ENCODE measurements at regions of chr6 and their contacts with region 1.

Region 1: GRCh38 chr6:144582939-144583613 is 297.9 kb downstream of the UTRN start:
- DNase-seq: no peak
- ATAC-seq: no peak
- H3K4me3 ChIP-seq: no peak overlapping the region; a peak in 1 of 4 replicates
- H3K27ac ChIP-seq: no peak overlapping the region
- H3K4me1 ChIP-seq: no peaks in the 10 kb centered on the region
- H3K27me3 ChIP-seq: no peaks in the 10 kb centered on the region
- CTCF ChIP-seq: no peak

Region 2: DNA sequence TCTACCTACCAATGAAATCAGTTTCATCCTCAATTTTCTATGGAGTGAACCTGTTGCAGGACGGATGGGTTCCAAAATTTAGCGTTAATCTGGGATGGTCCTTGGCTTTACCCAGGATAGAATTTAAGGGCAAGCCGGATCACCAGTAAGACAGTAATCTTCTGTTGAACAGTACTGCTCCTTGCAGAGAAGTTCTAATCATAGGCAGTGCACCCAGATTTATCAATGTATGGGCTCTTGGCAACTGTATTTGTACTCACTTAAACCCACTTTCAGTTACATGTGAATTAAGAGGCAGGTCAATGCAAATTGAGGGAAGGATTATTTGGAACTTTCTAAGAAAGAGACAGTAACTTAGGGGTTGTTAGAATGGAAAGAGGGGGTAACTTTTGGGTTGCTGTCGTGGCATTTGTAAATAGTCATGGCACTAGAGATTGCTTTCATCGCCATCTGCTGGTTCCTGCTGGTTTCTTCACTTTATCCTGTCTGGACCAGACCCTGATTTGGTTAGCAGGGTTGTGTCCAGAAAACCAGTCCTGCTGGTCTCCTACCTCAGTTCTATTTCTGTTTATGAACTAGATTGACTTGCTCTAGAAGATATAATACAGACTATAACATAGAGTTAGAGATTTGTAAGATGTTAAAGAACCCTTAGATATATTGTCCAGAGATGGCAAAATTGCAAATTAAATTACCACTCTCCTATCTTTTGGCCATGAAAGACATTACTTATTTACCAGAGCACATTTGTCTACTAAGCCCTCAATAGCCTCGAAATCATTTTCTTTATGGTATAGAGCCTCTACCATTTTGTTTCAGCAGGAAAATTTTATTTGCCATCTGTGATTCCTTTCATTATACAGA is 348.3 kb after region 1 on chr6:
- CTCF ChIA-PET with region 1: no interaction called
- POLR2A ChIA-PET with region 1: no interaction called
- in situ Hi-C with region 1: no loop called
- intact Hi-C with region 1: loop called (anchors 5 kb)
- DNase-seq: peak; percentile 25
- ATAC-seq: peak; percentile 79
- H3K4me3 ChIP-seq: no peak overlapping the region
- H3K27ac ChIP-seq: no peak overlapping the region
- H3K4me1 ChIP-seq: no peaks in the 10 kb centered on the region
- H3K27me3 ChIP-seq: no peaks in the 10 kb centered on the region
- CTCF ChIP-seq: peak; percentile 70

Region 3: GRCh38 chr6:145028144-145028818 is 445.2 kb after region 1 on chr6:
- CTCF ChIA-PET with region 1: interaction called, 5 read pairs
- POLR2A ChIA-PET with region 1: no interaction called
- in situ Hi-C with region 1: no loop called
- intact Hi-C with region 1: loop called (anchors 5 kb)
- DNase-seq: peak; percentile 48
- ATAC-seq: peak; percentile 93
- H3K4me3 ChIP-seq: no peak overlapping the region
- H3K27ac ChIP-seq: no peak overlapping the region
- H3K4me1 ChIP-seq: no peaks in the 10 kb centered on the region
- H3K27me3 ChIP-seq: no peaks in the 10 kb centered on the region
- CTCF ChIP-seq: peak; percentile 68; the same call in 1 of the 2 replicates

Region 4: GRCh38 chr6:145214570-145214969 is 631.5 kb after region 1 on chr6:
- CTCF ChIA-PET with region 1: no interaction called
- POLR2A ChIA-PET with region 1: no interaction called
- in situ Hi-C with region 1: no loop called
- intact Hi-C with region 1: loop called (anchors 5 kb)
- DNase-seq: peak; percentile 15
- ATAC-seq: no peak
- H3K4me3 ChIP-seq: no peak overlapping the region
- H3K27ac ChIP-seq: no peak overlapping the region
- H3K4me1 ChIP-seq: no peaks in the 10 kb centered on the region
- H3K27me3 ChIP-seq: no peaks in the 10 kb centered on the region
- CTCF ChIP-seq: peak; percentile 71; the same call in 1 of the 2 replicates

Region 5: GRCh38 chr6:145633981-145634627 is 1051.0 kb after region 1 on chr6:
- CTCF ChIA-PET with region 1: no interaction called
- POLR2A ChIA-PET with region 1: no interaction called
- in situ Hi-C with region 1: no loop called
- intact Hi-C with region 1: loop called (anchors 10 kb)
- DNase-seq: peak; percentile 71
- ATAC-seq: peak; percentile 98
- H3K4me3 ChIP-seq: no peak overlapping the region
- H3K27ac ChIP-seq: no peak overlapping the region
- H3K4me1 ChIP-seq: no peaks in the 10 kb centered on the region
- H3K27me3 ChIP-seq: no peaks in the 10 kb centered on the region
- CTCF ChIP-seq: peak; percentile 89

Region 6: DNA sequence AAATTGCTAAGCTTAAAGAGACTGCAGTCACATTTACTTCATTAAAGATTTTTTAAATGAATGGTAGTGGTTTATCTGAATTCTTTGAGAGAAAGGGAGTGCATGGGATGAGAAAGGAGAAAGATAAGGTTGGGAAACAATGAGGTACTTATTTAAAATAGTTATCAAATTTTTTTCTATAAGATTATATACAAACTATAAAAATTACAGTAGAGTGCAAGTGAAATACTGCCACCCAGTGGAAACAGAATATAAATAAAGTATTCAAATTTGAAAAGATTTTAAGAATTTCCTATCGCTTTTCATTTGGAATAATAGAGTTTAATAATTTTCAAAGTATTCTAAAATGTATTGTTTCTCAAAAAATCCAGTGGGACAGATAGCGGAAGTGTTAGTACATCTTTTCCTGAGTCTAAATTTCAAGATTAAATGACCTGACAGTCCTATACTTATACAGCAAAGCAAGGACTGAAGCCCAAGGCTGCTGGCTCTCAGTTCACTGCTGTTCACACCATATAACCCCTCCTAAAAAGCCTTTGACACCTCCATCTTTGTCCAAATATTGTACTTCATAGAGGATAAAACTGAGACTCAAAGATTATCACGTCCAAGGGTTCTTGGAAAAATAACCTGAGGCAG is 1121.2 kb after region 1 on chr6:
- CTCF ChIA-PET with region 1: no interaction called
- POLR2A ChIA-PET with region 1: no interaction called
- in situ Hi-C with region 1: no loop called
- intact Hi-C with region 1: loop called (anchors 10 kb)
- DNase-seq: no peak
- ATAC-seq: no peak
- H3K4me3 ChIP-seq: no peak overlapping the region
- H3K27ac ChIP-seq: no peak overlapping the region
- H3K4me1 ChIP-seq: no peaks in the 10 kb centered on the region
- H3K27me3 ChIP-seq: no peaks in the 10 kb centered on the region
- CTCF ChIP-seq: peak; percentile 56; the same call in 1 of the 2 replicates

Measured in Panc1 (cell line).